Psoas muscle (tissue), 8 donors: ENCODE measurements at regions of chr12 and their contacts with region 1.

Region 1: GRCh38 chr12:103930034-103930786 is at the start of gene HSP90B1:
- DNase-seq: peak; percentile 99
- ATAC-seq: peak; percentile 92 to 95 (median 94)
- H3K4me3 ChIP-seq: peak within 1 kb of the TSS; percentile 87
- H3K27ac ChIP-seq: peak within 1 kb of the TSS; percentile 95
- H3K4me1 ChIP-seq: peaks cover 31% of the 10 kb centered on the region
- H3K27me3 ChIP-seq: no peaks in the 10 kb centered on the region
- CTCF ChIP-seq: no peak
- total RNA-seq, gene HSP90B1: 85.7 to 137 (median 126) TPM

Region 2: GRCh38 chr12:103877934-103878510 is 52.2 kb before region 1 on chr12:
- intact Hi-C with region 1: loop called (anchors 5 kb)
- DNase-seq: peak; percentile 18 to 58
- ATAC-seq: peak; percentile 83 to 92 (median 86)
- H3K4me3 ChIP-seq: no peak overlapping the region
- H3K27ac ChIP-seq: no peak overlapping the region
- H3K4me1 ChIP-seq: no peaks in the 10 kb centered on the region
- H3K27me3 ChIP-seq: no peaks in the 10 kb centered on the region
- CTCF ChIP-seq: peak; percentile 72

Region 3: GRCh38 chr12:103956516-103957027 is 26.4 kb after region 1 on chr12:
- intact Hi-C with region 1: loop called in 1 of 2 experiments (anchors 2 kb)
- DNase-seq: no peak
- ATAC-seq: peak; percentile 37 to 58 (median 48)
- H3K4me3 ChIP-seq: peak overlapping the region; percentile 99
- H3K27ac ChIP-seq: peak overlapping the region; percentile 91
- H3K4me1 ChIP-seq: peaks cover 20% of the 10 kb centered on the region
- H3K27me3 ChIP-seq: no peaks in the 10 kb centered on the region
- CTCF ChIP-seq: no peak

Region 4: DNA sequence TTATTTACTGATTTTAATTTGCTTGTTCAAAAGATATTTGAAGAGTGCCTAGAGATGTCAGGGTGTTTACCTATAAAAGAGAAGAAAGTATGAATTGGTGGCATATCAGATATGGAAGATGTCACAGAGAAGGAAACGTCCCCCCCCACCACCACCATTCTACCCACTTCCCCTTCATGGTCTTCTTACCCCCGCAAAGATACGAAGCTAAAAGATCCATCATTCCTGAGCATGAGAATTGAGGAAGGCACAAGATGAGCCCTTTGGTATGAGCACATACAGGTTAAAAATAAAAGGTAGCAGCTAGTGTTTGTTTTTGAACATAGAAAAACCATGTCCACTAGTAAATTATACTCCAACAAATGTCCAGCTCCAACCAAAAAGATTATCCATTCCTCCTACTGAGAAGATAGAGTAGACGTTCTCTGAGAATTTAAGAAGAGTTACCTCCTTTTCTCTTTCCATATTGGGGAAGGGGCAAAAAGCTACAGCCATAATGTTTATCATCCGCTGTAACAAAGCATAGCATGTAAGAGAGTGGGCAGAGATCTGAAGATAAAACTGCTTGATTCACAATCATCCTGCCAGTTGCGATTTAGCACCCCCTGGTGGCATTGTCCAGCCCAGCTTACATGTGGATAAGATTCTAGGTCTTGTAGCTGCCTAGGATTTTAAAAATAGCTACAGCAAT is 178.7 kb after region 1 on chr12:
- intact Hi-C with region 1: loop called in 1 of 2 experiments (anchors 10 kb)
- DNase-seq: peak; percentile 85 to 90
- ATAC-seq: peak; percentile 92 to 97 (median 94)
- H3K4me3 ChIP-seq: no peak overlapping the region
- H3K27ac ChIP-seq: peak overlapping the region; percentile 49
- H3K4me1 ChIP-seq: peaks cover 12% of the 10 kb centered on the region
- H3K27me3 ChIP-seq: no peaks in the 10 kb centered on the region
- CTCF ChIP-seq: peak; percentile 86